GM12878 (cell line): ENCODE measurements at regions of chr3 and their contacts with region 1.

Region 1: GRCh38 chr3:192825657-192826200 is 91.9 kb downstream of the MB21D2 start:
- DNase-seq: no peak
- ATAC-seq: peak; percentile 76
- H3K4me3 ChIP-seq: no peak overlapping the region
- H3K27ac ChIP-seq: no peak overlapping the region
- H3K4me1 ChIP-seq: peaks cover 20% of the 10 kb centered on the region
- H3K27me3 ChIP-seq: no peaks in the 10 kb centered on the region
- CTCF ChIP-seq: peak in 2 of 3 experiments; percentile 0 to 20; a peak in 1 of 6 replicates
- EP300 ChIP-seq: peak; percentile 83 to 95; a peak in 3 of 4 replicates
- POLR2A ChIP-seq: no peak
- RAD21 ChIP-seq: 0 out of 2 replicates have a peak, but pooled peaks have one; percentile 14

Region 2: DNA sequence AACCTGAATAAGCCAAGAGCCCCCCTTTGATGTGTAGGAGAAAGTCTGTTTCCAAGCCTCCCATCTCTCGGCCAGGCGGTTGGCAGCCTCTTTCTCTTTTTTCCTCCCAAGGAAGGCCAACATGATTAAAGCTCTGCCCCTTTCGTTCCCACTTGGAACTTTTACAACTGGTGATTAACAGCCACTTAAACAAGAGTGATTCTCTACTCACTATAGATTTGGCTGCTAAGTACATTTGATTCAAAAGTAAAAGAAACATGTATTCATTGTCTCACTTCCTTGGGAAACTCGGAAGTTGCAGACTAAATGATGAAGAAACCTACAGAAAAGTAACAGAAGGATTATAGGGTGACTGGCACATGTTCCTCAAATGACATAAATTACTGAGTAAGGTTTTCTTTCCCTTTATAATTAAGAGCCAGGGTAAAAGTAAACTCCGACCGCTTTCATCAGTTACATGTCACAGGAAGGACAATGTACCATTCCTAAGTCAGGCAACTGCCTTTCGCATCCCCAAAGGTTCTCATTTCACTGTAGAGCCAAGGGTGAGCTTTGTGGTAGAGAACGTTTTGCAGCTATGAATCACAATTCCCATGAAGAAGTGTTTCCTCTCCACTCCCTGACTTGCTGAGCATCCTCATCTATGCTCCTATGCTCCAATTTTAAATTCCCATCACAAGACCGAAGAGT is 19.3 kb after region 1 on chr3:
- CTCF ChIA-PET with region 1: interaction called, 17 read pairs
- POLR2A ChIA-PET with region 1: interaction called, 7 read pairs
- RAD21 ChIA-PET with region 1: interaction called, 83 read pairs
- SMC1A ChIA-PET with region 1: interaction called, 82 read pairs
- in situ Hi-C with region 1: no loop called
- intact Hi-C with region 1: loop called (anchors 2 kb)
- DNase-seq: no peak
- ATAC-seq: no peak
- H3K4me3 ChIP-seq: no peak overlapping the region
- H3K27ac ChIP-seq: peak overlapping the region; percentile 61
- H3K4me1 ChIP-seq: peaks cover 51% of the 10 kb centered on the region
- H3K27me3 ChIP-seq: no peaks in the 10 kb centered on the region
- CTCF ChIP-seq: no peak
- EP300 ChIP-seq: no peak
- POLR2A ChIP-seq: no peak
- RAD21 ChIP-seq: no peak

Region 3: DNA sequence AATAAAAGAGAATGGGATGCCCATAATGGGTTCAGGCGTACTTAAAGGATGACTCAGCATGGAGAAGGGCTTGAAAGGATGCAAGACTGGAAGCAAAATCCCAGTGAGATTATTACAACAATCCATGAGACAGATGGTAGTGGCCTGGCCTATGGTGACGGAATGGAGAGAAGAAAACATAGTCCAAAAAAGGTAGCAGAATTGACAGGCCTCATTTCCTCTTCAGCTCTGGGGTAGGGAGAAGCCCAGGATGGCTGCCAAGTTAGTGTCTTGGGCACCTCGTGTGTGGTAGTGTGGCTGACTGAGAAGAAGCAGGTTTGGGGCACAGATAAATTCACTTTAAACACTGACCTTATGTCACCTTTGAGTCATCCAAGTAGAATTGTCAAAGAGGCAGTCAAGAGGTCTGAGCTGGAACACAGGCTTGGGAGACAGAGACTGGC is 73.8 kb after region 1 on chr3:
- CTCF ChIA-PET with region 1: no interaction called
- POLR2A ChIA-PET with region 1: interaction called, 3 read pairs
- RAD21 ChIA-PET with region 1: interaction called, 15 read pairs
- SMC1A ChIA-PET with region 1: interaction called, 179 read pairs
- in situ Hi-C with region 1: no loop called
- intact Hi-C with region 1: no loop called
- DNase-seq: no peak
- ATAC-seq: peak; percentile 50
- H3K4me3 ChIP-seq: no peak overlapping the region
- H3K27ac ChIP-seq: peak overlapping the region; percentile 70
- H3K4me1 ChIP-seq: peaks cover 49% of the 10 kb centered on the region
- H3K27me3 ChIP-seq: no peaks in the 10 kb centered on the region
- CTCF ChIP-seq: no peak
- EP300 ChIP-seq: no peak
- POLR2A ChIP-seq: 0 out of 2 replicates have a peak, but pooled peaks have one; percentile 2
- RAD21 ChIP-seq: no peak